ENCODE measurements at regions of chr11 and their contacts with region 1.

Region 1: GRCh38 chr11:27698872-27699474 is 1.3 kb downstream of the BDNF start:
- DNase-seq: peak; percentile 55
- H3K4me3 ChIP-seq: peak overlapping the region; percentile 49 to 66 (median 58)
- H3K27ac ChIP-seq: no peak overlapping the region
- H3K4me1 ChIP-seq: peaks cover 23% of the 10 kb centered on the region
- H3K27me3 ChIP-seq: peaks cover 7% of the 10 kb centered on the region
- CTCF ChIP-seq: peak; percentile 34 to 85

Region 2: GRCh38 chr11:27158722-27159679 is 540.0 kb before region 1 on chr11:
- CTCF ChIA-PET with region 1: interaction called, 16 read pairs
- dilution Hi-C with region 1: no loop called
- in situ Hi-C with region 1: no loop called
- intact Hi-C with region 1: no loop called
- DNase-seq: peak; percentile 64
- H3K4me3 ChIP-seq: no peak overlapping the region
- H3K27ac ChIP-seq: peak overlapping the region; percentile 22
- H3K4me1 ChIP-seq: peaks cover 6% of the 10 kb centered on the region
- H3K27me3 ChIP-seq: no peaks in the 10 kb centered on the region
- CTCF ChIP-seq: peak; percentile 78 to 86

Region 3: GRCh38 chr11:27718346-27718852 is 19.4 kb after region 1 on chr11:
- CTCF ChIA-PET with region 1: interaction called, 24 read pairs
- dilution Hi-C with region 1: no loop called
- in situ Hi-C with region 1: no loop called
- intact Hi-C with region 1: no loop called
- DNase-seq: peak; percentile 39
- H3K4me3 ChIP-seq: peak overlapping the region; percentile 41 to 45 (median 44)
- H3K27ac ChIP-seq: no peak overlapping the region
- H3K4me1 ChIP-seq: peaks cover 14% of the 10 kb centered on the region
- H3K27me3 ChIP-seq: peaks cover 45% of the 10 kb centered on the region
- CTCF ChIP-seq: no peak

Region 4: GRCh38 chr11:28384418-28384817 is 685.4 kb after region 1 on chr11:
- CTCF ChIA-PET with region 1: interaction called, 36 read pairs
- dilution Hi-C with region 1: no loop called
- in situ Hi-C with region 1: no loop called
- intact Hi-C with region 1: no loop called
- DNase-seq: peak; percentile 91
- H3K4me3 ChIP-seq: no peak overlapping the region
- H3K27ac ChIP-seq: no peak overlapping the region
- H3K4me1 ChIP-seq: no peaks in the 10 kb centered on the region
- H3K27me3 ChIP-seq: no peaks in the 10 kb centered on the region
- CTCF ChIP-seq: no peak

Region 5: GRCh38 chr11:29159552-29160465 is 1460.8 kb after region 1 on chr11:
- CTCF ChIA-PET with region 1: interaction called, 11 read pairs
- dilution Hi-C with region 1: no loop called
- in situ Hi-C with region 1: no loop called
- intact Hi-C with region 1: loop called (anchors 1 kb)
- DNase-seq: peak; percentile 55
- H3K4me3 ChIP-seq: no peak overlapping the region
- H3K27ac ChIP-seq: no peak overlapping the region
- H3K4me1 ChIP-seq: peaks cover 4% of the 10 kb centered on the region
- H3K27me3 ChIP-seq: no peaks in the 10 kb centered on the region
- CTCF ChIP-seq: peak; percentile 81 to 91

Region 6: GRCh38 chr11:29333993-29334775 is 1635.2 kb after region 1 on chr11:
- CTCF ChIA-PET with region 1: interaction called, 4 read pairs
- dilution Hi-C with region 1: no loop called
- in situ Hi-C with region 1: loop called in 1 of 2 experiments (anchors 10 kb)
- intact Hi-C with region 1: loop called (anchors 1 kb)
- DNase-seq: peak; percentile 48
- H3K4me3 ChIP-seq: no peak overlapping the region
- H3K27ac ChIP-seq: no peak overlapping the region
- H3K4me1 ChIP-seq: peaks cover 16% of the 10 kb centered on the region
- H3K27me3 ChIP-seq: no peaks in the 10 kb centered on the region
- CTCF ChIP-seq: peak; percentile 59 to 64

Measured in mammary epithelial cell (primary cell).